Mammary epithelial cell (primary cell): ENCODE measurements at regions of chrX and their contacts with region 1.

Region 1: GRCh38 chrX:72126539-72127140 is 5.1 kb downstream of the RTL5 start:
- DNase-seq: peak; percentile 76
- H3K4me3 ChIP-seq: no peak overlapping the region
- H3K27ac ChIP-seq: no peak overlapping the region
- H3K4me1 ChIP-seq: peaks cover 13% of the 10 kb centered on the region
- H3K27me3 ChIP-seq: no peaks in the 10 kb centered on the region
- CTCF ChIP-seq: peak; percentile 90 to 92

Region 2: DNA sequence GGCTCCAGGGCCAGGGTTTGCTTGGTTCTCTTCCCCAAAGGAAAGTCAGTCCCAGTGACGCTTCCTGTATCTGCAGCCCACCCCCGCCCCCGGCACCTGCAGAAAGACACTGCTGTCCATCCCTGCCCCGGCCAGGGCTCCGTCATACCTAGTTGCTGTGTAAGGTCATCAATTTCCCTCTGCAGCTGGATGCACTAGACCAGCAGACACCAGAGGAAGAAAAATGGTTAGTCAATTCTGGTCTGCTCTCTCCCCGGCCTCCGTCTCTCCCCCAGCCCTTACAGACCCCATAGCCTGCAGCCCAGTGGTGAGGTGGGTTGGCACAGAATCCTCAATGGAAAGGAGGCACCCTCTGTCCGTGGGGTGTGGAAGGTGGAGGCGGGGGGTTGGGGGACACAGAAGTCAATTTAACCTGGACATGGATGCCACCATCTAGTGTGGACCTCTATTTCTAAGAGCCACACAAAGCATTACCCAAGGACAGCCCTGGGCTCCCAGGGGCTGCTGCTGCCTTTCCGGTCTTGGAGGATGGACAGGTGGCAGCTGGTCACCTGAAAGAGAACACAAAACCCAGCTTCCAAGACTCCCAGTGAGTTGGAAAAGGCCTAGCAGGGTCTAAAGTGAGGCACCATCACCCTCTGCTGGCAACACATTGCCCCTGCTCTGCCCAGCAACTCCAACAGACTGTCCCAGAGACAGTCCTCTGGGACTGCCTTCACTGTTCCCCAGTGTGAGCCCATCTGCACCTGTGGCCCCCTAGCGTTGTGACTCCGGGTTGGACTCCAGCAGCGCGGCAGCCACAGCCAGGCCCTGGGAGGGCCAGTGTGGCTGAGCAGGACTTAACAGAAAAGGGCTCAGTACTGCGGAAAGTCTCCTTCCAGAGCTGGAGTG is 256.2 kb before region 1 on chrX:
- CTCF ChIA-PET with region 1: no interaction called
- dilution Hi-C with region 1: no loop called
- in situ Hi-C with region 1: no loop called
- intact Hi-C with region 1: loop called (anchors 5 kb)
- DNase-seq: peak; percentile 39
- H3K4me3 ChIP-seq: no peak overlapping the region
- H3K27ac ChIP-seq: no peak overlapping the region
- H3K4me1 ChIP-seq: no peaks in the 10 kb centered on the region
- H3K27me3 ChIP-seq: no peaks in the 10 kb centered on the region
- CTCF ChIP-seq: peak; percentile 20 to 36

Region 3: DNA sequence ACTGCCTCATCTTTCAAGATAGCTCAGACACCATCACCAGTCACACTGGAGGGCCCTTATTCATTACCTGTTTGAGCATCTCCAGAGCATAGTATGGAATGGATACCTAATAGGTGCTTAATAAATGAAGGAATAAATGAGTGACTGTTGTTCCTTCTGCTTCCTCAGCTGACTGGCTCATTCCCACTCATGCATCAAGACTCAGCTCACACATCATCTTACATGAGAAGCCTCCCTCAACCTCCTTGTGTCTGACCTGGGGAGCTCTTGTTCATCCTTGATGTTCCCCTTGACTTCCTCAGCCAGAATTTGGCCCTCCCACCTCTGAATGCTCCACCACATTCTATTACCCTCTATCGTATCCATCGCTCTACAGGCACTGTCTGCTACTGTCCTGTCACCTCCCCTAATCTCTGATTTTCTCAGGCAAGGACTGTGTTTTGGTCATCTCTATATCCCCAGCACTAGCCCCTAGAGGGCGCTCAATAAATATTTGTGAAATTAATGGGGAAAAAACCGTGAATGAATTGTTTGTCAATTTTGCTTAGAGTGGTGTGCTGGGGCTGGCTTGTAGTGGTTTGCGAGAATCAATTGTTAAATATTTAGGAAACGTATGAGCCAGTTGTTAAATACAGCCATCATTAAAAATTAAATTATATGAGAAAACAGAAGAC is 127.7 kb before region 1 on chrX:
- CTCF ChIA-PET with region 1: no interaction called
- dilution Hi-C with region 1: no loop called
- in situ Hi-C with region 1: loop called in 1 of 2 experiments (anchors 10 kb)
- intact Hi-C with region 1: loop called (anchors 1 kb)
- DNase-seq: no peak
- H3K4me3 ChIP-seq: no peak overlapping the region
- H3K27ac ChIP-seq: no peak overlapping the region
- H3K4me1 ChIP-seq: peaks cover 11% of the 10 kb centered on the region
- H3K27me3 ChIP-seq: no peaks in the 10 kb centered on the region
- CTCF ChIP-seq: peak; percentile 52 to 69

Region 4: DNA sequence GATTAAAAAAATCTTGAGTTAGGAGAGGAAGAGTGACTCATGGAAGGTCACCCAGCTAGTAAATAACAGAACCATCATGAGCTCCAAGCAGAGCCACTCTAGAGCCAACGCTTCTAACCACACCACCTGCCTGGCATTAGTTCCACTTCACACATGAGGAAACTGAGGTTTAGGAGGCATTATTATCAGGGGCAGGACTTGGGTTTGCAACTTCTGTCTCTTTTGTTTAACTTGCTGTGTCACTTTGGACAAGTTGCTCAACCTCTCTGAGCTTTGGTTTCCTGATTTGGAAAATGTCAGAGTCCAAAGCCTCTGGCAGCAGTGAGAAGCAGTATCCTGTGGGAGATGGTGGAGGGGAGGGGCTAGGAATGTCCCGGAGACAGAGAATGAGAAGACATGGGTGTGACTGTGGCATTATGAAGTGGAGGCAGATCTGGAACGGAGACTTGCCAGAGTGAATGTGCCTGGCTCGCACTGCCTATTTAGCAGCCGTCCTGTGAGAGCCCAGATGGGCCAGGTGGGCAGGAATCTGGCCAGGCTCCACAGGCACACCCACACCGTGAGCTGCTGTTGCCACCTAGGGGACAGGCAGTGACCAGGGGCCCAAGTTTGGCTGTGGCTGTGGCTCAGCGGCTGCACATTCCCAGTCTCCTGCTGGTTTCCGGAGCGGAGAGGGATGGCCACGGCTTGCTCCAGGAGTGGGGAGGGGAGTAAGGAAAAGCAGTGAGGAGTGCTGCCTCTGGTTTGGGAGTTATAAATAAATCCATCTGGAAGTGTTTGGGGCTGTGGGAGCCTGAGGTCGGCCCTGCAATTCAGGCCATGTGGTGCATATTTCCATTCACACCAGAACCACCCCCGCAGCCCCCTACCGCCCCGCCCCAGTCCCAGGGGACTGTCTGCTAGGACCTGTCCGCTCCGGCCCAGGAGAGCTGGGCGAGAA is 122.6 kb before region 1 on chrX:
- CTCF ChIA-PET with region 1: no interaction called
- dilution Hi-C with region 1: no loop called
- in situ Hi-C with region 1: loop called in 1 of 2 experiments (anchors 10 kb)
- intact Hi-C with region 1: loop called (anchors 1 kb)
- DNase-seq: peak; percentile 10
- H3K4me3 ChIP-seq: no peak overlapping the region
- H3K27ac ChIP-seq: no peak overlapping the region
- H3K4me1 ChIP-seq: peaks cover 6% of the 10 kb centered on the region
- H3K27me3 ChIP-seq: no peaks in the 10 kb centered on the region
- CTCF ChIP-seq: peak in 1 of 2 donors; percentile 31

Region 5: GRCh38 chrX:72018277-72019112 is 108.1 kb before region 1 on chrX:
- CTCF ChIA-PET with region 1: no interaction called
- dilution Hi-C with region 1: no loop called
- in situ Hi-C with region 1: loop called in 1 of 2 experiments (anchors 10 kb)
- intact Hi-C with region 1: loop called (anchors 1 kb)
- DNase-seq: peak; percentile 77
- H3K4me3 ChIP-seq: peak overlapping the region in 2 of 3 experiments; percentile 16 to 23
- H3K27ac ChIP-seq: no peak overlapping the region
- H3K4me1 ChIP-seq: peaks cover 5% of the 10 kb centered on the region
- H3K27me3 ChIP-seq: peaks cover 8% of the 10 kb centered on the region
- CTCF ChIP-seq: peak; percentile 15 to 44

Region 6: GRCh38 chrX:72030431-72030830 is 96.2 kb before region 1 on chrX:
- CTCF ChIA-PET with region 1: no interaction called
- dilution Hi-C with region 1: no loop called
- in situ Hi-C with region 1: no loop called
- intact Hi-C with region 1: no loop called
- DNase-seq: no peak
- H3K4me3 ChIP-seq: no peak overlapping the region
- H3K27ac ChIP-seq: no peak overlapping the region
- H3K4me1 ChIP-seq: peaks cover 20% of the 10 kb centered on the region
- H3K27me3 ChIP-seq: peaks cover 2% of the 10 kb centered on the region
- CTCF ChIP-seq: no peak

Region 7: GRCh38 chrX:72181178-72182125 is 54.8 kb after region 1 on chrX and contains the start of gene PIN4:
- CTCF ChIA-PET with region 1: no interaction called
- dilution Hi-C with region 1: no loop called
- in situ Hi-C with region 1: no loop called
- intact Hi-C with region 1: loop called (anchors 2 kb)
- DNase-seq: peak; percentile 93
- H3K4me3 ChIP-seq: peak within 1 kb of the TSS; percentile 67 to 82 (median 81)
- H3K27ac ChIP-seq: peak within 1 kb of the TSS; percentile 63
- H3K4me1 ChIP-seq: peaks cover 5% of the 10 kb centered on the region
- H3K27me3 ChIP-seq: no peaks in the 10 kb centered on the region
- CTCF ChIP-seq: no peak
- total RNA-seq, gene PIN4: 3.0 to 5.5 TPM